ENCODE measurements at regions of chr19 and their contacts with region 1.

Region 1: DNA sequence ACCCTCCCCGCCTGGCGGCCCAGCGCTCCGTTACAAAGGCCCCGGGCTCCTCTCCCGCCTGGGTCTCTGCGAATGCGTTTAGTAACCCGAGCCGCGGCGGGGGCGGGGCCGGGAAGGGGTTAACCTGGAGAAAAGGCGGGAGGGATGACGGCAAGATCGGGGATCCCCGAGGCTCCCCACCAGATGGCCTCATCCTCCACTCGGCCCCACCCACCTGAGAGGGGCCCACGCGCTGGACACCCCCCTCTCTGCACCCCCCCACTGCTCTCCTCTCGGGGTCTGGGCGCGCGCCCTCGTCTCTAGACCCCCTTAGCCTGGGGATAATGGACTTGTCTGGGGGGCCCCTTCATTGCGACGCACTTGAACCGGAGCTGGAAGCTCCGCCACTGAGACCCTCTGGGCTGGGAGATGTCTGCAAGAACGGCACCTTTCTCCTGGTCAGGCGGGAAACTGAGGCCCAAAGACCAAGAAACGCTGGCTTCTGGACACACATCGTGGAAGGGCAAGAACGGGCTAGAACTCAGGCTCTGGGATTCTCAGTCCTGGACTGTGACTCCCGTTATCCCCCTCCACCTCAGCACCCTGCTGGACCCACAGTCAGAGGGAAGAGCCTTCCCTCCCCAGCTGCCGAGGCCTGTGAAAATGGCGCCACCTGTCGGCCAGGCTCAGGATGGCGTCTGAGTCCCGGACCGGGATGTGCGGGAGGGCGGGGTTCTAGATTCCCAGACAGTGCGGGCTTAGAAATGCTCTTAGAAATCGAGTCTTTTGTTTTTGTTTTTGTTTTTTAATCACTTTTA is 2.9 kb upstream of the LTBP4 start:
- DNase-seq: peak; percentile 95
- H3K4me3 ChIP-seq: peak overlapping the region in 1 of 8 donors; percentile 11
- H3K27ac ChIP-seq: no peak overlapping the region
- H3K4me1 ChIP-seq: peaks cover 37 to 74% (median 65%) of the 10 kb centered on the region in 6 donors
- H3K27me3 ChIP-seq: peaks cover 0 to 91% (median 57%) of the 10 kb centered on the region in 7 donors
- CTCF ChIP-seq: peak; percentile 92 to 98 (median 98)
- POLR2A ChIP-seq: no peak

Region 2: GRCh38 chr19:40530091-40530901 is 68.0 kb before region 1 on chr19:
- intact Hi-C with region 1: loop called (anchors 10 kb)
- DNase-seq: no peak
- H3K4me3 ChIP-seq: peak overlapping the region in 2 of 8 donors; percentile 47 to 72
- H3K27ac ChIP-seq: no peak overlapping the region
- H3K4me1 ChIP-seq: peaks cover 2 to 17% (median 12%) of the 10 kb centered on the region in 6 donors
- H3K27me3 ChIP-seq: peaks cover 0 to 51% (median 11%) of the 10 kb centered on the region in 7 donors
- CTCF ChIP-seq: no peak
- POLR2A ChIP-seq: no peak